Vagina (tissue), 2 donors: ENCODE measurements at regions of chr22 and their contacts with region 1.

Region 1: DNA sequence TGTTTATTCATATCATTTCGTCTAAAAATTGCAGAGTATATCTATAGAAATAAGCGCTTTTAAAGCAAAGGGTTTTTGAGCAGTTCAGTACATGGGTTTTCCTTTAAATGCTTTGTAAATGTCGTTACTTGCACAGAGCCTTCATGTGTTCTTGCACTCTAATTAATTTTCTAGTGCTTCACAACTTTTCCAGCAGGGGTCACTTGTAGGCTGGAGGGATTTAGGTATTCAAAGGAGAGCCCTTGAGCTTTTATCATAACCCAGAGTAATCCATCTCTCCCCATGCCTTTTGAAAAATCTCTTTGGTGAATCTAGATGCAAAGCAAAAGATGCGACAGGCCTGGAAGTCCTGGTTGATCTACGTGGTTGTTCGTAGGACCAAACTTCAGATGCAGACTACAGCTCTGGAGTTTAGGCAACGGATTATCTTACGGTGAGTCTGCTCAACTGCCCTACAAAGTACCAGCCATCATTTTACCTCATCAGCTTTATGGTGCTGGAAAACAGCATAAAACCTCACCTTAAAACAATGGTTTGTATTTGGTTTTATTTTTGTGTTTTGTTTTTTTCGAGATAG is 60.4 kb downstream of the SFI1 start:
- DNase-seq: no peak
- H3K4me3 ChIP-seq: no peak overlapping the region
- H3K27ac ChIP-seq: no peak overlapping the region
- H3K4me1 ChIP-seq: no peaks in the 10 kb centered on the region
- H3K27me3 ChIP-seq: no peaks in the 10 kb centered on the region
- CTCF ChIP-seq: peak; percentile 15 to 36 (median 26)
- POLR2A ChIP-seq: no peak

Region 2: DNA sequence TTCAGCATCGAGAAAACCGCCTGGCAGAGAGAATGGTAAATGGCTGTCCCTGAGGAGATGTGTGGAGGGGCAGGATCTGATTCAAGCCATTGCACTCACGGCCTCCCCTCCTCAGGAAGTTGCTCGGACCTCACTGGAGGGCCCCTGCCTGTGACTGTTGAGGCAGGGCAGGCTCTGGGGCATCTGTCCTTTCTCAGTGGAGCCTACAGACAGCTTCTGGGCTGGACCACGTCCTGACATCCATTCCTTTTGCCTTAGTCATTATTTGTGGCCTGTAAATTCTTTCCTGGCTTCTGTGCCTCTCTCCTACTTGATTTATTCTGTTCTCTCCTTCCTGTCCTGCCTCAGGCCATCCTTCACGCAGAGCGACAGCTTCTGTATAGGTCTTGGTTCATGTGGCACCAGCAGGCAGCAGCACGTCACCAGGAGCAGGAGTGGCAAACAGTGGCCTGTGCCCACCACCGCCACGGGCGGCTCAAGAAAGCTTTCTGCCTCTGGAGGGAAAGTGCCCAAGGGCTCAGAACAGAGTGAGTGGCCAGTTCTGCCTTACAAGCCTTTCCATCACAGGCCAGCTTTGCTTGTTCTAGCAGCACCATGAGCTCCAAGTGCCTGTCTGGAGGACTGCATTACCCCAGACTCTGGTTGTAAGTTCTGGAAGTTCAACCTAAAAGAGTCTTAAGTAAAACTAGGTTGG is 45.7 kb after region 1 on chr22:
- intact Hi-C with region 1: no loop called
- DNase-seq: no peak
- H3K4me3 ChIP-seq: no peak overlapping the region
- H3K27ac ChIP-seq: no peak overlapping the region
- H3K4me1 ChIP-seq: peaks cover 10% of the 10 kb centered on the region
- H3K27me3 ChIP-seq: no peaks in the 10 kb centered on the region
- CTCF ChIP-seq: no peak
- POLR2A ChIP-seq: no peak

Region 3: DNA sequence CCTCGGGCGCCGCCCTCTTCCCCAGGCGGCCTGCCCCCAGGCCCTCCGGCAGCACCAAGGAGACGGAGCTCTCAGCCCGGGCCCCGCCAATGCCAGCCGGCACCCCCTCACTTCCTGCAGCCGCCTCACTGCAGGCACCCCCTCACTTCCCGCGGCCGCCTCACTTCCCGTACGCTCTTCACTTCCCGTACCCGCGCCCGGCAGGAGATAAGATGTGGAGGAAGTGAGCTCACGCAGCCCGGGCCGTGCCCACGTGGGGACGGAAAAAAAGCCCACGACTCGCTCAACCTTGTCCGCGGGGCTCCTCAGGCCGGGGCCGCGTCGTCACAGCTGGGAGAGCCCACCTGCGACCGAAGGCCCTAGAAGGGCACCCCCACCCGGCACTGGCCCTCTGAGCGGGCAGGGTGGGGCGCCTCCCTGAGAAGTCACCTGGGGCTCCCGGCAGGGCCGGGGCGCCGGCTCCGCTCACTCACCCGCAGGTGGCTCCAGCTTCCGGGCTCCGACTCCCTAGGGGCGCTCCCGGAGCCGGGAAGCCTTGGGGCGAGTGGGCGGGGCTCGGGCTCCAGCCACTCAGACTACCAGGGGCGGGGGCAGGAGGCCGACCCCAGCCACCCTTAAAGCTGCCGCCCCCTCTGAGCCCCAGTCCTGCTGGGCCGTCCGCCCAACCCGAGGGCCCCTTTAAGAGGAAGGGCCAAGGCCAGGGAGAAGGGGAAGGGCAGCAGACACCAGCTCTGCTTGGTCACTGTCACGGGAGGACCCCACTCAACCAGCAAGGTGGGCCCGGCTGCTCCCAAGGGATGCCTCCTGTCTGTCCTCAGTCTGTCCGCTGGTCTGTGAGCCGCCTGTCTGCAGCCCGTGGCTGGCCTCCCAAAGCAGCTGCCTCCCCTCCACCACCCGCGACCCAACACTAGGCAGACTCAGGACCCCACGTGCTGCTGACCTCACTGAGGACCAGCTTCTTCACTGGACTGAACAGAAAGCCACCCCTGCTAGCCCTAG is 73.9 kb after region 1 on chr22:
- intact Hi-C with region 1: loop called (anchors 2 kb)
- DNase-seq: no peak
- H3K4me3 ChIP-seq: peak overlapping the region; percentile 89 to 90
- H3K27ac ChIP-seq: peak overlapping the region; percentile 89
- H3K4me1 ChIP-seq: peaks cover 73% of the 10 kb centered on the region
- H3K27me3 ChIP-seq: no peaks in the 10 kb centered on the region
- CTCF ChIP-seq: no peak
- POLR2A ChIP-seq: no peak